Adrenal gland (tissue), 19 donors: ENCODE measurements at regions of chr14 and their contacts with region 1.

Region 1: DNA sequence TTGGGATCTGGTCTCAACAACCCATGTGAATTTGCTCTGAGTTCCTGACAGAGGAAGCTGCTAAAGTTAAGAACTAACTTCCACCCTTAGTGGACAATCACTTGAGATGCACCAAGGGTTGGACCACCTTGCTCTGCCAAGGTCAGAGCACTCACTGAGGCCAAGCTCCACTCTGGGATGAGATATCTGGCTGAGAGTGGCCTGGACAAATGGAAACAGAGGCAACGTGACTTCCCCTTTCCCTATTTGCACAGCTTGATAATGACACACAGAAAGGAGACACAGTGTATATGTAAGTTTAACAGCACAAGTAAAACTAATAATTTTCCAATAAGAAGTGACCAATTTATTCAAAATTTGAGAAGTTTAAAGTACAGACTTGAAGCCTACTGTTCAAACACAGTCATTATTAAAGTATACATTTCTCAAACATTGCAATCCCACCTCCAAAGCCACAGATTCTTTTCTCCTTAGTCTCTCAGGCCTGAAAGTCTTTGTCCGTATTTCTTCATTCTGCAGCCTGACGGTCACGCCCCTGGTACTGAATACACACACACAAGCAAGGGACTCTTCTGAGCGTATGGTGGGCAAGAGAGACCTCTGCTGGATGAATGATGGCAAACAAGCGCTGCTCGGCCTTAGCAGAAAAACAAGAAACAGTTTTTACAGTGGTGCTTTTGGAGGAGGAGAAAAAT is 28.6 kb downstream of the TMEM30B start:
- DNase-seq: peak; percentile 70 to 91 (median 83)
- H3K4me3 ChIP-seq: no peak overlapping the region
- H3K27ac ChIP-seq: no peak overlapping the region
- H3K4me1 ChIP-seq: peaks cover 6 to 7% of the 10 kb centered on the region in 2 donors
- H3K27me3 ChIP-seq: no peaks in the 10 kb centered on the region
- CTCF ChIP-seq: peak; percentile 75 to 90 (median 86)
- POLR2A ChIP-seq: no peak

Region 2: GRCh38 chr14:60622917-60623257 is 629.6 kb before region 1 on chr14:
- intact Hi-C with region 1: loop called (anchors 2 to 10 kb)
- DNase-seq: no peak
- H3K4me3 ChIP-seq: no peak overlapping the region
- H3K27ac ChIP-seq: no peak overlapping the region
- H3K4me1 ChIP-seq: no peaks in the 10 kb centered on the region
- H3K27me3 ChIP-seq: no peaks in the 10 kb centered on the region
- CTCF ChIP-seq: no peak
- POLR2A ChIP-seq: no peak